GM12878 (cell line): ENCODE measurements at regions of chr3 and their contacts with region 1.

Region 1: DNA sequence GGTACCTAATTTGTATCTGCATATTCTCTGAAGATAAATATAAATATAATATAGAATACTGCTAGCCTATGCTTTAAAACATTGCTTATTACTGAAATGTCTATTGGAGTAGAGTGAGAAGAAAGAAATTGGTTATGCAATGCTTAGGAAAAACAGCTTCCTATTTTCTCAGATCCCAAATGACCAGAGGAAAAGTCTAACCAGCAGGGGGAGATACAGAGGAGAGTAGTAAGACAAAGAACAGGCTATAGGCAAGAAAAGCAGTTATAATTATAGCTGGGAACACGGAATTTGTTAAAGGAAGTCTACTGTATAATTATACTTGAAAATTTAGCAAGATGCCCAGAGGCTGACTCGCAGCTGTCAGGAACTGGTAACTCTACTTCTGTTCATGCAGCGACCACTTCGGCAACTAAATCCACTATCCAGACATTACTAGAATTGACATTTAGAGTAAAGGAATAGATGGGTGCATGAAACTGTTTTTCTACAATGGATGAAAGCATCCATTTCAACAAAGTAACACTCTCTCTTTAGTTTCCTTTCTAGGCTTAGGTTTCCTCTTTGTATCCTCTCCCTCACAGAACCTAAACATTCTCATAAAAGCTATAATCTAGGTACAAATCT is 97.2 kb downstream of the TBC1D5 start:
- DNase-seq: no peak
- ATAC-seq: peak; percentile 65
- H3K4me3 ChIP-seq: no peak overlapping the region
- H3K27ac ChIP-seq: no peak overlapping the region
- H3K4me1 ChIP-seq: no peaks in the 10 kb centered on the region
- H3K27me3 ChIP-seq: no peaks in the 10 kb centered on the region
- CTCF ChIP-seq: peak; percentile 45 to 54 (median 53); a peak in 5 of 6 replicates
- EP300 ChIP-seq: no peak
- POLR2A ChIP-seq: no peak
- RAD21 ChIP-seq: peak; percentile 59

Region 2: GRCh38 chr3:17655743-17656142 is 10.6 kb after region 1 on chr3:
- CTCF ChIA-PET with region 1: interaction called, 12 read pairs
- POLR2A ChIA-PET with region 1: no interaction called
- RAD21 ChIA-PET with region 1: interaction called, 3 read pairs
- SMC1A ChIA-PET with region 1: interaction called, 6 read pairs
- in situ Hi-C with region 1: no loop called
- intact Hi-C with region 1: no loop called
- DNase-seq: no peak
- ATAC-seq: peak; percentile 93
- H3K4me3 ChIP-seq: peak overlapping the region; percentile 10; the same call in 1 of the 2 replicates
- H3K27ac ChIP-seq: no peak overlapping the region
- H3K4me1 ChIP-seq: peaks cover 9% of the 10 kb centered on the region
- H3K27me3 ChIP-seq: no peaks in the 10 kb centered on the region
- CTCF ChIP-seq: no peak
- EP300 ChIP-seq: no peak
- POLR2A ChIP-seq: no peak
- RAD21 ChIP-seq: no peak

Region 3: DNA sequence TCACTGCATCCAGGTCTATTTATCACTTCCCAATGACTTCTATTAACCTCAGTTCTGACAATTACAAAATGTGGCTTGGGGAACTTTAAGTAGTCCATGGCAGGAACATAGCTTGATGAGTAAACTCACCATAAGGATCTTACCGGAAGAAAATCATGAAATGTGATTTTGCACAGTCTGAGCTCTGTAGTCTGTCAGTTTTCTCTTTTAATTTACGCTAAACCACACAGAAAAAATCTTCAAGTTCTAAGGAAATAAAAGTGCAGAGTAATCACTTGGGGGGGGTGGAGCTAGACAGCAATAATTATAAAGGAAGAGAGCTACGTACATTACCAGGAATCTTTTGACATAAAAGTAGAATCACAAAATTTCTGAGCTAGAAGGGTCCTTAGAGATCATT is 88.0 kb after region 1 on chr3:
- CTCF ChIA-PET with region 1: interaction called, 6 read pairs
- POLR2A ChIA-PET with region 1: interaction called, 3 read pairs
- RAD21 ChIA-PET with region 1: interaction called, 5 read pairs
- SMC1A ChIA-PET with region 1: interaction called, 13 read pairs
- in situ Hi-C with region 1: no loop called
- intact Hi-C with region 1: loop called (anchors 5 kb)
- DNase-seq: no peak
- ATAC-seq: no peak
- H3K4me3 ChIP-seq: no peak overlapping the region
- H3K27ac ChIP-seq: no peak overlapping the region
- H3K4me1 ChIP-seq: no peaks in the 10 kb centered on the region
- H3K27me3 ChIP-seq: no peaks in the 10 kb centered on the region
- CTCF ChIP-seq: no peak
- EP300 ChIP-seq: no peak
- POLR2A ChIP-seq: no peak
- RAD21 ChIP-seq: no peak

Region 4: GRCh38 chr3:17747174-17747889 is 102.1 kb after region 1 on chr3:
- CTCF ChIA-PET with region 1: interaction called, 10 read pairs
- POLR2A ChIA-PET with region 1: no interaction called
- RAD21 ChIA-PET with region 1: interaction called, 4 read pairs
- SMC1A ChIA-PET with region 1: interaction called, 4 read pairs
- in situ Hi-C with region 1: no loop called
- intact Hi-C with region 1: no loop called
- DNase-seq: peak; percentile 73
- ATAC-seq: peak; percentile 75
- H3K4me3 ChIP-seq: peak overlapping the region; percentile 42; the same call in 1 of the 2 replicates
- H3K27ac ChIP-seq: peak overlapping the region; percentile 77
- H3K4me1 ChIP-seq: peaks cover 31% of the 10 kb centered on the region
- H3K27me3 ChIP-seq: no peaks in the 10 kb centered on the region
- CTCF ChIP-seq: no peak
- EP300 ChIP-seq: peak; percentile 60 to 89; a peak in 2 of 4 replicates
- POLR2A ChIP-seq: no peak
- RAD21 ChIP-seq: no peak

Region 5: GRCh38 chr3:17964108-17964507 is 318.9 kb after region 1 on chr3:
- CTCF ChIA-PET with region 1: no interaction called
- POLR2A ChIA-PET with region 1: no interaction called
- RAD21 ChIA-PET with region 1: no interaction called
- SMC1A ChIA-PET with region 1: no interaction called
- in situ Hi-C with region 1: no loop called
- intact Hi-C with region 1: no loop called
- DNase-seq: no peak
- ATAC-seq: no peak
- H3K4me3 ChIP-seq: no peak overlapping the region
- H3K27ac ChIP-seq: no peak overlapping the region
- H3K4me1 ChIP-seq: no peaks in the 10 kb centered on the region
- H3K27me3 ChIP-seq: no peaks in the 10 kb centered on the region; a peak in 1 of 4 replicates
- CTCF ChIP-seq: no peak
- EP300 ChIP-seq: no peak
- POLR2A ChIP-seq: no peak
- RAD21 ChIP-seq: no peak